ENCODE measurements at regions of chrX and their contacts with region 1.

Region 1: DNA sequence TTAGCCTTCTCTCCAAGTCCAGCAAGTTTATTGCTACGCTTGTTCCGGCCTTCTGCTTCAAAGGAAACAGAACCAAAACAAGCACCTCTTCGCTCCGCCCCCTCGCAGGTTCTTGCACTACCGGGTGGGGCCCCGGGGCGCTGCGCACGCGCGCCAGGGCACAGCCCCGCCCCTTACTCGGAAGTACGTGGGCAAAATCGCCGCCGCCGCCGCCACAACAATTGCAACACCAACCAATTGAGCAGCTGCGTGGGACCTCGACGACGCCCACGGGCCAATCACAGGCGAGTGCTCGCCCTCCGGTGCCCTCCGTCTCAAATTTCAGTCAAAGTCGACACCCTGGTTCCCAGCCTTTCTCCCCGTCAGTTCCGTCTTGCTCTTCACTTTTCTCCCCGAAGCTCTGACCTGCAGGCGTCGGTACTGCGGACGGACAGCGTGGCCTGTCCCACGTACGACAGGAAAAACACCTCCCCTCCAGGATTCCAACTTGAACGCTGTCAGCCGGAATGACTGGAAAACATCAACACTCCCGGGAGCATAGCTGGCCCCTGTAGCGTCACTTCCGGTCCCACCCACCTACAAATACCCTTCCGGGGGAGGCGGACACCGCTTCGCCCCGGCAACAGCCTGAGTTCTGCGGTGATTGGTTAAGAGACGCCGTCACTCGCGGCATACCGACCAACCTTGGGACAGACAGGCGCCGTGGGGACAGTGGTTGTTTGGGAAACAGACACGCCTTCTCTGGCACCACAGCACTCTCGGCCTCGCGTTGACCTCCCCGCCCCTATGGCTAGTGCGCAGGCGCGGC is 624 bp upstream of the OTUD5 start:
- DNase-seq: peak; percentile 95
- H3K4me3 Mint-ChIP-seq: peak overlapping the region; percentile 99
- H3K27ac Mint-ChIP-seq: peak overlapping the region; percentile 100
- H3K4me1 Mint-ChIP-seq: peaks cover 32% of the 10 kb centered on the region
- H3K27me3 Mint-ChIP-seq: no peaks in the 10 kb centered on the region

Region 2: DNA sequence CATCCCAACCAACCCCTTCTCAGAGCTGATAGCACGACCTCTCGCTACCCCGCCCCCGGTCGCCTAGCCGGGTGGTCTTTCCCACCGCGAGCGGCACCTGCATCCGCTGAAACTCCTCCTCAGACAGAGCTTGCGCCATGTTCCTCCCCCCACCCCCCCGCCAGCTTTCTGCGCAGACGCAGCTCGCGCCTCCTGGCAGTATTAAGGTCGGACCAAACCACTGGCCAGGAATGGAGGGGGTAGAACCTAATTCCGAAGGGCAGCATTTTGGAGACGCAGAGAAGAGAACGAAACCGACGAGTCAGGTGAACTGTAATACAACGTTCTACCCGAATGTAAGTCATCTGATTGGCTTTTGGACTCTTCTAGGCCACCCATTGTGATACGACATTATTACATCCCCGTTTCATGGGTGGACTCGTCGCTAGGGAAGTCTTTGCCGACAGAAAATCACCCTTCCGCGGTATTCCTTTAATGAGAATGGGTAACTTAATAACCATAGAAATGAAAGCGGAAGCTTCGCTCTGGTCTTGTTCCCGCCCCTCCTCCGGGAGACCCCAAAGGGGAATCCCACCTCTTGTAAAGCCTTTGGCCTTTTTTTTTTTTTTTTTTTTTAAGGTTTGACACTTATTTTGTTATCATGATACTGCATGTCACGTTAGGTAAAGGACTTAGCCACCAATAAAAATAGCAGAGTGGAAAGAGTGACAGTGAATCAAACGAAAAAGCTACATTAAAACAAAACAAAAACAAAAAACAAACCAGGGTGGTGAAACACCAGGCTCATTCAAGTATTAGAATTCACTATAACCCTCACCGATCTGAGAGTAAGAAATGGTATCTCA is 44.3 kb after region 1 on chrX and contains the start of gene GRIPAP1:
- CTCF ChIA-PET with region 1: no interaction called
- POLR2A ChIA-PET with region 1: interaction called, 3 read pairs
- intact Hi-C with region 1: loop called (anchors 1 kb)
- DNase-seq: peak; percentile 85
- H3K4me3 Mint-ChIP-seq: peak within 1 kb of the TSS; percentile 99
- H3K27ac Mint-ChIP-seq: peak within 1 kb of the TSS; percentile 98
- H3K4me1 Mint-ChIP-seq: peaks cover 35% of the 10 kb centered on the region
- H3K27me3 Mint-ChIP-seq: no peaks in the 10 kb centered on the region
- total RNA-seq, gene GRIPAP1: 76.1 to 78.4 TPM